ENCODE measurements at regions of chr19 and their contacts with region 1.

Region 1: DNA sequence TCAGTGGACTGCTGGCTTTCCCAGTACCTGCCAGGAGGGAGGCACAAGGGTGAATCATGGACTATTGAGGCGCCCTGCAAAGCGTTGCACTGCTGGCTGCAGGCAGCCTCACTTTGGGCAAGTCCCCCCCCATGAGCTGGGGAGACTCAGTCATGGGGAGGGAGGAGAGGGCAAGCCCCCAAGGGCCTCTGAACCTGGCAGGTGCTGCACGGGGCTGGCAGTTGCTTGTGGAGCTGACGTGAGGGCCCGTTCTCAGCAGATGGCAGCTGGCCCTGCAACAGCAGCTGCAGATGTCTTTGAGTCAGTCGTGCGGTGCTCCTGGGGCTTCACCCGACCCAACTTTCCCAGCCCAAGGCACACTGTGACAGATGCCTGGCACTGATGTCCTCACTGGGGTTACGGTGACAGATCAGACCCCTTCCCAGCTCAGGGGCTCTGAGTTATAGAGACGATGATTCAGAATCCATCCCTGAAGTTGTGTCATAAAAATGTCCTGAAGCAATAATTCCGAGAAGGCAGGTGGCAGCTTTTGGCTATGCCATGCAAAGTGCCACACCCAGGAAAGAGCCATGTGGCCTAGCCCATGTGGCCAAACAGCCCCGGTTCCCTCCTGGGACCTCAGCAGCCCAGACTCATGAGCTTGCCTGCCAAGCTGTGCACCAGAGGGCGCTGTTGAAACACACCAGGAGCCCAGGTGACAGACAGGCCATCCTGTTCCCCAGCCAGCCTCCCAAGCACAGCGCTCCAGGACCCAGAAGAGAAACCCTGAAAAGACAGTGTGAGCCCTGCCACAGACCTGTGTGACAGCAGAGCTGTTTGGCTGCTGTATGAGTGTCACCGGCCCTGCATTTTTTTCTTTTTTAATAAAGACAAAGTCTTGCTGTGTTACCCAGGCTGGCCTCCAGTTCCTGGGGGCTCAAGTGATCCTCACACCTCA is 53.6 kb upstream of the LDLR start:
- DNase-seq: peak; percentile 71
- ATAC-seq: peak; percentile 99
- H3K4me3 ChIP-seq: no peak overlapping the region
- H3K27ac ChIP-seq: no peak overlapping the region; the same call in 1 of the 2 replicates
- H3K4me1 ChIP-seq: peaks cover 4% of the 10 kb centered on the region; the same call in 1 of the 2 replicates
- H3K27me3 ChIP-seq: no peaks in the 10 kb centered on the region
- CTCF ChIP-seq: peak; percentile 93 to 99 (median 97); a peak in 5 of 6 replicates
- EP300 ChIP-seq: no peak
- POLR2A ChIP-seq: peak; percentile 44; the same call in 1 of the 2 replicates
- RAD21 ChIP-seq: peak; percentile 92

Region 2: DNA sequence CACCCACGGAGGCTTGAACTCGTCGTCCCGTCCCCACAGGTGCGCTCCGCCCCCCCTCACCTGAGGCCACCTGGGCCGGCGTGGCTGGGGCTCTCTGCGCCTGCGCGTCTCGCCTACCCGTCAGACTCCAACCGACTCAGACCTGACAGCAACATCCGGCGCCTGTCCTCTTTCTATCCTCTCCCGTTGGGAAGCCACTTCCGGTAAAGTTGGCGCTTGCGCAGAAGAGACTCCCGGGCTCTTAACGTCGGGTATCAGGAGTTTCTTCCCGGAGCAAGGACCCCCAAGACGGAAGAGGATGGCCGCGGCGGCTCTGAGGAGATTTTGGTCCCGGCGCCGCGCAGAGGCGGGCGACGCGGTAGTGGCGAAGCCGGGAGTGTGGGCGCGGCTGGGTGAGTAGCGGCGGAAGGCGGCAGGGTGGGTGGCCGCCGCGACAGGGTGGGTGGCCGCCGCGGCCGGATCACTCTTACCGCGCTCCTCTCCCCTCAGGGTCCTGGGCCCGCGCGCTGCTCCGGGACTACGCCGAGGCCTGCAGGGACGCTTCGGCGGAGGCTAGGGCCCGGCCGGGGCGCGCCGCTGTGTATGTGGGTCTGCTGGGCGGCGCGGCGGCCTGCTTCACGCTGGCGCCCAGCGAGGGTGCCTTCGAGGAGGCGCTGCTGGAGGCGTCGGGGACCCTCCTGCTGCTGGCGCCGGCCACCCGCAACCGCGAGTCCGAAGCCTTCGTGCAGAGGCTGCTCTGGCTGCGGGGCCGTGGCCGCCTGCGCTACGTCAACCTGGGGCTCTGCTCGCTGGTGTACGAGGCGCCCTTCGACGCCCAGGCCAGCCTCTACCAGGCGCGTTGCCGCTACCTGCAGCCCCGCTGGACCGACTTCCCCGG is 106.9 kb before region 1 on chr19 and contains the starts of genes TIMM29 and YIPF2:
- CTCF ChIA-PET with region 1: interaction called, 11 read pairs
- POLR2A ChIA-PET with region 1: no interaction called
- RAD21 ChIA-PET with region 1: no interaction called
- SMC1A ChIA-PET with region 1: interaction called, 5 read pairs
- in situ Hi-C with region 1: no loop called
- intact Hi-C with region 1: no loop called
- DNase-seq: peak; percentile 87
- ATAC-seq: peak; percentile 94
- H3K4me3 ChIP-seq: peak within 1 kb of the TSS; percentile 89
- H3K27ac ChIP-seq: peak within 1 kb of the TSS; percentile 46
- H3K4me1 ChIP-seq: peaks cover 7% of the 10 kb centered on the region
- H3K27me3 ChIP-seq: no peaks in the 10 kb centered on the region
- CTCF ChIP-seq: no peak
- EP300 ChIP-seq: 0 out of 4 replicates have a peak, but pooled peaks of 1 of the 2 experiments have one; percentile 41
- POLR2A ChIP-seq: peak; percentile 83
- RAD21 ChIP-seq: no peak
- polyA plus RNA-seq, gene TIMM29: 2.4 to 6.5 TPM
- polyA plus RNA-seq, gene YIPF2: 0.92 to 3.9 TPM

Region 3: DNA sequence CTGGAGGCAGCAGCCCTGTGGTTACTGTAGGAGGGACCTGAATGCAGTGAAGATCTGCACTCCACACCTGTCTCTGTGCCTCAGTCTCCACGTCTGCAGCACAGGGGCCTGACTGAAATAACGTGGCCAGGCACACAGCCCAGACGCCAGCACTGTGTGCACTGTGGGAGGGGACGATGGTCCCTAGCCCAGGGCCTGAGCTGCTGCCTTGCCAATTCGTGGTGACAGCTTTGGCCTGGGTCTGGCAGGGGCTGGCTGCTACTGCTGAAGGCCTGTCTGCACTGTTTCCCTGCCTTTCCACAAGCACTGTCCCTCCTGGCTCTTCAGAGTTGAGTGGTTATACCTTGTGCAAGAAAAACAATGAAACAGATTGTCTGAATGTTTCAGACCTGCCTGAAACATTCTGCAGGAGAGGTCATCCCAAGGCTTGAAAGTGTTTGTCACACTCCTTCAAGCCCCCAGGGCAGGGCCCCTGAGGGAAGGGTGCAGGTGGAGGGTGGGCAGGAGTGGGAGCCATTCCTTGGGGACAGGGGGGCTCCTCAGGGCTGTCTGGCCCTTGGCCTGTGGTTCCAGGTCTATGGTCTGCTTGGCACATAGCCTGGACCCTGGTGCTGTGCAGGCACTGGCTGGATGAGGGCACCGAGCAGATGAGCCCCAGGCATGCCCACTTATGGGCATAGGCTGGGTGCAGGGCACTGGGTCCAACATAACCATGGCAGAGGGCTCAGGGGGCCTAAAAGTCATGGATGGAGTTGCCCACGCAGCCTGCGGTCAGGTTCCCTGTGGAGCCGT is 14.8 kb after region 1 on chr19:
- CTCF ChIA-PET with region 1: interaction called, 15 read pairs
- POLR2A ChIA-PET with region 1: no interaction called
- RAD21 ChIA-PET with region 1: interaction called, 6 read pairs
- SMC1A ChIA-PET with region 1: interaction called, 5 read pairs
- in situ Hi-C with region 1: no loop called
- intact Hi-C with region 1: no loop called
- DNase-seq: no peak
- ATAC-seq: no peak
- H3K4me3 ChIP-seq: no peak overlapping the region
- H3K27ac ChIP-seq: peak overlapping the region; percentile 71
- H3K4me1 ChIP-seq: peaks cover 58% of the 10 kb centered on the region
- H3K27me3 ChIP-seq: no peaks in the 10 kb centered on the region
- CTCF ChIP-seq: no peak
- EP300 ChIP-seq: no peak
- POLR2A ChIP-seq: no peak
- RAD21 ChIP-seq: no peak

Region 4: DNA sequence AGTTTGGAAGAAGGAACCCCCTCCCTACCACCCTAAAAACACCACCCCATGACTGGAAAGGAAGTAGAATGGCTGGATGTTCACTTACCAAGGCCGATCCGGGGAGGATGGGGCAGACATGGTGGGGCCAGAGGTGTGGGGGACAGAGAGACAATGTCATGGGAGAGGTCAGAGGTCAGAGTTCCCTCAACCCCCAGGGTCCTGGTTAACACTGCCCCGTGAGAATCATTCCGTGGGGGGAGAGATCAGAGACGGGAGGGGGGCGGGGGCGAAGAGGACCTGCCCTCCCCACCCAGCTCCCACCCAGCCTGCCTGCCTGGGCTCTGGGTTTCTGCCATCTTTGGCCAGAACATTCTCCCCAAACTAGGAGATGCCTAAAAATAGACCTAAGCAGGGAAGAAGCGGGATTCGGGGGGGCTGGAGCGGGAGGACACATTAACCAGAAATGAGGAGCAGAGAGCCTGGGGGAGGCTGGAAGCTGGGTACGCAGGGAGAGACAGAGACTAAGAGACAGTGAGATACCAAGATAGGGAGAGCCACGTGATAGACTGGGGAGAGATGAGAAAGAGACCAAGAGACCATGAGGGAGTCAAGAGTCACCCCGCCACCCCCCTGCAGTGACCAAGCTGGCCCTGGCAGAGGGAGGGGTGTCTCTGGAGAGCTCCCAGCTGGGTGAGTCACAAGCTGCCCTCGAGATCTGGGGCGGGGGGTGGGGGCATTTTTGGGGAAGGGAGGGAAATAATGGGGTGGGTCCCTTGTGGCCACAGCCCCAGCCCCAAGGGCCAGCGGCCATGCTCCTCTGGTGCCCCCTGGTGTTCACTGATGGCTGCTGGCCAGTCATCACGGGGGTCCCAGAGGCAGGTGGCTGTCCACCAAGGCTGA is 167.7 kb after region 1 on chr19:
- CTCF ChIA-PET with region 1: interaction called, 25 read pairs
- POLR2A ChIA-PET with region 1: no interaction called
- RAD21 ChIA-PET with region 1: interaction called, 13 read pairs
- SMC1A ChIA-PET with region 1: interaction called, 10 read pairs
- in situ Hi-C with region 1: loop called (anchors 5 kb)
- intact Hi-C with region 1: loop called (anchors 5 kb)
- DNase-seq: no peak
- ATAC-seq: peak; percentile 71
- H3K4me3 ChIP-seq: no peak overlapping the region
- H3K27ac ChIP-seq: no peak overlapping the region
- H3K4me1 ChIP-seq: peaks cover 11% of the 10 kb centered on the region
- H3K27me3 ChIP-seq: no peaks in the 10 kb centered on the region
- CTCF ChIP-seq: peak; percentile 60 to 93 (median 81)
- EP300 ChIP-seq: no peak
- POLR2A ChIP-seq: no peak
- RAD21 ChIP-seq: peak; percentile 78